ENCODE measurements at regions of chr1 and their contacts with region 1.

Region 1: GRCh38 chr1:24201941-24202440 is 14.9 kb upstream of the IFNLR1 start:
- DNase-seq: no peak
- ATAC-seq: peak; percentile 48
- H3K4me3 Mint-ChIP-seq: no peak overlapping the region
- H3K27ac Mint-ChIP-seq: no peak overlapping the region
- H3K4me1 Mint-ChIP-seq: peaks cover 35% of the 10 kb centered on the region
- H3K27me3 Mint-ChIP-seq: no peaks in the 10 kb centered on the region
- CTCF ChIP-seq: no peak

Region 2: GRCh38 chr1:23979878-23980724 is 221.9 kb before region 1 on chr1 and contains the start of gene SRSF10:
- CTCF ChIA-PET with region 1: no interaction called
- POLR2A ChIA-PET with region 1: no interaction called
- intact Hi-C with region 1: loop called (anchors 10 kb)
- DNase-seq: peak; percentile 92
- ATAC-seq: peak; percentile 96
- H3K4me3 Mint-ChIP-seq: peak within 1 kb of the TSS; percentile 96
- H3K27ac Mint-ChIP-seq: peak within 1 kb of the TSS; percentile 95
- H3K4me1 Mint-ChIP-seq: peaks cover 54% of the 10 kb centered on the region
- H3K27me3 Mint-ChIP-seq: no peaks in the 10 kb centered on the region
- CTCF ChIP-seq: no peak
- total RNA-seq, gene SRSF10: 168 and 192 TPM in 2 replicates

Region 3: DNA sequence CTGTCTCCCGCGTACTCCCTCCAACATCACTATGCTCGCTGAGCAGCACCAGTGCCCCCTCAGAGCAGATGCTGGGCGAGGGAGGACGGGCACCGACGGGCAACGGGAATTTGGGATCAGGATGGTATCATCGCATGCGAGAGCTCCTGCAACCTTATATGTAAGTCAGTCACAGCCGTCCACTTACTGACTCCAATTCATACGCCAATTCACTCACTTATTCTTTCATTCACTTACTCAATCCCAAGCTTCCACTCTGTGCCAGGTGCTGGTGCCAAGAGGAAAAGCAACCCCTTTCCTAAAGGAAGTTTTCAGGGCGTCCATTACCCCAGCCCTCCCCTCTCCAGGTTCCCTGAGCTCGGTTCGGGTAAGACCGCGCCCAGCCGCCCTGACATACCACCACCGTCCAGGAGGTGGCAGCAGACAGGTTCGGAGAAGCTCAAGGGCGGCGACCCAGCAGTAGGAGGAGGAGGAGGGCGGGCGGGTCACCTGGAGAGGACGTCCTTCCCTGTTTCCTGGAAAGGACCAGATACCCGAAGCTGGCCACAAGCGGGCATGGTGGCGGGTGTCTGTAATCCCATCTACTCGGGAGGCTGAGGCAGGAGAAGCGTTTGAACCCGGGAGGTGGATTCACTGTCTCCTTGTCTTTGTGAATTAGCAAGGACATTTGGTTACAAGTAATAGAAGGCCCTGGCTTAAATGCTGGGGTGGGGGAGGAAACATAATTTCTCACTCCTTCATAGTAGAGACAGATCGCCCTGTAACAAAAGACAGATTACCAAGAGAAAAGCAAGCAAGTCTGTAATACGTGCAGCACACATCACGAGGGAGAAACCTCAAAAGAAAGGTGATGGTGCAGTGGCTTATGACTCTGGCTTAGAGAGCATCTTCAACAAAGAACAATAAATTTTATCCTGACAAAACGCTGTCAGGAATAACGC is 51.5 kb before region 1 on chr1:
- CTCF ChIA-PET with region 1: interaction called, 135 read pairs
- POLR2A ChIA-PET with region 1: interaction called, 7 read pairs
- intact Hi-C with region 1: loop called (anchors 1 kb)
- DNase-seq: peak; percentile 89
- ATAC-seq: peak; percentile 98
- H3K4me3 Mint-ChIP-seq: peak overlapping the region; percentile 74
- H3K27ac Mint-ChIP-seq: peak overlapping the region; percentile 20
- H3K4me1 Mint-ChIP-seq: peaks cover 27% of the 10 kb centered on the region
- H3K27me3 Mint-ChIP-seq: peaks cover 3% of the 10 kb centered on the region
- CTCF ChIP-seq: no peak

Region 4: GRCh38 chr1:24385160-24385940 is 183.4 kb after region 1 on chr1:
- CTCF ChIA-PET with region 1: interaction called, 388 read pairs
- POLR2A ChIA-PET with region 1: interaction called, 49 read pairs
- intact Hi-C with region 1: no loop called
- DNase-seq: no peak
- ATAC-seq: peak; percentile 43
- H3K4me3 Mint-ChIP-seq: peak overlapping the region; percentile 29
- H3K27ac Mint-ChIP-seq: peak overlapping the region; percentile 69
- H3K4me1 Mint-ChIP-seq: peaks cover 32% of the 10 kb centered on the region
- H3K27me3 Mint-ChIP-seq: no peaks in the 10 kb centered on the region
- CTCF ChIP-seq: no peak

Region 5: DNA sequence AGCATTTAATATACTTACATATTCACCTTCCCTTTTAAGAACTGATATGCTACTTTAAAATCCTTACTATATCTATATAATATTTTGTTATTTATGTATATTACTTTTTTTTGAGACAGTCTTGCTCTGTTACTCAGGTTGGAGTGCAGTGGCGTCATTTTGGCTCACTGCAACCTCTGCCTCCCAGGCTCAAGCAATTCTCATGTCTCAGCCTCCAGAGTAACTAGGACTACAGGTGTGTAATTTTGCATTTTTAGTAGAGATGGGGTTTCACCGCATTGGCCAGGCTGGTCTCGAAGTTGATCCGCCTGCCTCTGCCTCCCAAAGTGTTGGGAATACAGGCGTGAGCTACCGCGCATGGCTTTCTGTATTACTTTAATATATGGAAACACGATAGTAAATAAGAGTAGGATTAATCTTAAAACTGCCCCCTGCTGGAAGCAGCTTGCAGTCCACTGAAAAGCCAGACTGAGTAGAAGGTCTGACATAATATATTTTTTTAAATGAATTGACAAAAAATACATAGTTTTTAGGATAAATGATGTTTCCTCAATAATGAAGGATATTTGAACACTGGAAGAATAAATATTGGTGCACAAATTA is 325.1 kb after region 1 on chr1:
- CTCF ChIA-PET with region 1: interaction called, 6 read pairs
- POLR2A ChIA-PET with region 1: no interaction called
- intact Hi-C with region 1: loop called (anchors 2 kb)
- DNase-seq: no peak
- ATAC-seq: no peak
- H3K4me3 Mint-ChIP-seq: no peak overlapping the region
- H3K27ac Mint-ChIP-seq: no peak overlapping the region
- H3K4me1 Mint-ChIP-seq: peaks cover 4% of the 10 kb centered on the region
- H3K27me3 Mint-ChIP-seq: no peaks in the 10 kb centered on the region
- CTCF ChIP-seq: no peak

Region 6: DNA sequence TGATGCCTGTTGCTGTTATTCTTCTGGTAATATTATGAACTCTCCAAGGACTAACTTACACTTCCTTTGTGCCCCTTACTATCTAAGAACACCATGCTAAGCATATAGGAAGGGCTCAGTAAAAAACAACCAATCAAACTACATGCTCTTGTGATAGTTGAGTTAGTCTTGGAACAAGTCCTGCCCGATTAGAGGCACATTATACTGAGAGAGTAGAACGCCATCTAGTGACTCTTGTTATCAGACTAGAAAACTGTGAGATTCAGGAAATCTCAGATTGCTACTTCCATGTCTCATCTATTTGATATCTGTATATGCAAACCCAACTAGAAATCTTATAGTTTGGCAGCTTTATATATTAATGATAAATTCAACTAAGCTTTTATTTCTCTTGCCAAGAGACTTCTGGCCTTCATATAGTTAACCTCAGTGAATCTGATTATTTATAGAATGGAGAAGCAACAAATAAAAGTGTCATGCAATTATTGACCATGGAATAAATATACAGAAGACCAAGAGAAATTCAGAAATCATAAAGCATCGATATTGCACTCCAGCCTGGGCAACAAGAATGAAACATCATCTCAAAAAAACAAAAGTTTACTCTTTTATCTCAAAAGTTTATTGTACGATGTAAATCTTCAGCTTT is 433.3 kb after region 1 on chr1:
- CTCF ChIA-PET with region 1: interaction called, 52 read pairs
- POLR2A ChIA-PET with region 1: no interaction called
- intact Hi-C with region 1: loop called (anchors 1 kb)
- DNase-seq: no peak
- ATAC-seq: peak; percentile 69
- H3K4me3 Mint-ChIP-seq: no peak overlapping the region
- H3K27ac Mint-ChIP-seq: no peak overlapping the region
- H3K4me1 Mint-ChIP-seq: peaks cover 2% of the 10 kb centered on the region
- H3K27me3 Mint-ChIP-seq: peaks cover 2% of the 10 kb centered on the region
- CTCF ChIP-seq: no peak